Sigmoid colon (tissue), 7 donors: ENCODE measurements at regions of chr7 and their contacts with region 1.

Region 1: DNA sequence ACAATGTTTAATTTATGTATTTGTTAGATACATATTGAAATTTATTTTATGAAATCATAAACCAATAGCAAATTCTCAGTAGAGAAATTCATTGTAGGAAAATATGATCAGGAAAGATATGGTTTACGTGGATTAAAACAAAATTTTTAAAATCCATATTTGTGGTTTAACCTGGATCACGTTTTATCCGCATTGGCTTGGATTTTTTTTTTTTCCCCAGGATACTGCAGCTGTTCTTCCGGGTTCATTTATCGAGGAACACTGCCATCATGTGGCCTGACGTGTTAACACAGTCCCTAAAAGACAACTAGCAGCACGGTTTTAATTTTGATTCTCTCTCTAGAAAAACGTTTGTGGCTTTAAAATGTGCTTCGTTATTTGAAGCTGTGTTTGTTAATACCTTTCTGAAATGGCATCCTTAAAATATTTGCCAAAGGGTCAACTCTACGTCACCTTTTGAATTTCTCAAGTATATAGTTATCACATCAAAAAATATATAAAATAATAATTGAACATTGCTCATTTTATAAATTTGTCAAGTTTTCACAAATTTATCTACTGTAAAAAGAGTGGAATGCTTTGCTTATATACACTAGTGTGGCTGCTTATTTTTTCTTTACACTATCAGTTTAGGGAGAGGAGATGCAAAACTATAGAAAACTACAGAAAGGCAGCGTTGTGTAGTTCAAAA is 8.7 kb upstream of the ASB4 start:
- DNase-seq: peak; percentile 77
- H3K4me3 ChIP-seq: no peak overlapping the region
- H3K27ac ChIP-seq: no peak overlapping the region
- H3K4me1 ChIP-seq: no peaks in the 10 kb centered on the region
- H3K27me3 ChIP-seq: no peaks in the 10 kb centered on the region
- CTCF ChIP-seq: peak; percentile 38 to 71 (median 64)
- EP300 ChIP-seq: no peak
- POLR2A ChIP-seq: no peak

Region 2: DNA sequence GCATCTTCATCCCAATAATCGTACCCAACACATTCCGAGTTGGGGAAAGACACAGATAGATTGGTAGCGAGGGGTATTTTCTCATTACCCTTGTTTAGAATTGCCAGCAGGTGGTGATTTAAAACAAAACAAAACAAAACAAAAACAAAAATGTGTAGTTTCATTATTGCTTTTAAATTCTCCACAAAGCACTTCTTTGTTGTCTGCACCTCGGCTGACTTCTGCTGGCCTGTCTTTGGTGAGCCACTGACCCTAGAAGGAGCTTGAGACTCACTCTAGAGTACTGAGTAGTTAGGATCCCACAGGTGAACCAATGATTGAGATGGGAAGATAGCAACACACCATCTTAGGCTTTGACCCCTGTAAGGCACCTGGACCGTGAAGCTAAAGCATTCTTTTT is 1367.5 kb before region 1 on chr7:
- intact Hi-C with region 1: loop called (anchors 10 kb)
- DNase-seq: no peak
- H3K4me3 ChIP-seq: no peak overlapping the region
- H3K27ac ChIP-seq: no peak overlapping the region
- H3K4me1 ChIP-seq: no peaks in the 10 kb centered on the region
- H3K27me3 ChIP-seq: no peaks in the 10 kb centered on the region
- CTCF ChIP-seq: no peak
- EP300 ChIP-seq: no peak
- POLR2A ChIP-seq: no peak

Region 3: DNA sequence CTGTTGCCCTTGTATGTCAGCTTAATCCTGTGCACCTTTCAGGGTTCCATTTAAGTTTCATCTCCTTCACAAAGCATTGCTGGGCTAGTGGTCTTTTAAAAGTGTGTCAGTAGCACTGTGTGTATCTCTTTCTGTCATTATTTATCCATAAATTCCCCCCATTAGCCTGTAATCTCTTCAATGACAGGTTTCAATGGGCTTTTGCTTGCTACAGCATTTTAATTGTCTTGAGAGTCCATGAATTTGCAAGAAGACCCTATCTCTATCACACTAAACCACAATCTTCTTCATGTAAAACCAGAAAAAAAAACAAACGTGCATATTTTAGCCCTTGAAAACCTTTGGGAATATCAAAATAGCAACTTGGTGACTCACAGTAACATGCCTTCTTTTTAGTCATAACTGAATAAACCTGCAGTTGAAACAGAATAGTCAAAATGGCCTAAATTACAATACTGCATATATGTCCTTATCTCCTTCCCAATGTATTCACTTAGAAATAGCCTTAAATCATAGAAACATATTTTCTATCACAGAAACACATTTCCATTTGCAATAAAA is 271.3 kb before region 1 on chr7:
- intact Hi-C with region 1: loop called (anchors 5 kb)
- DNase-seq: no peak
- H3K4me3 ChIP-seq: no peak overlapping the region
- H3K27ac ChIP-seq: no peak overlapping the region
- H3K4me1 ChIP-seq: peaks cover 0 to 7% (median 0%) of the 10 kb centered on the region in 4 donors
- H3K27me3 ChIP-seq: no peaks in the 10 kb centered on the region
- CTCF ChIP-seq: no peak
- EP300 ChIP-seq: no peak
- POLR2A ChIP-seq: no peak

Region 4: DNA sequence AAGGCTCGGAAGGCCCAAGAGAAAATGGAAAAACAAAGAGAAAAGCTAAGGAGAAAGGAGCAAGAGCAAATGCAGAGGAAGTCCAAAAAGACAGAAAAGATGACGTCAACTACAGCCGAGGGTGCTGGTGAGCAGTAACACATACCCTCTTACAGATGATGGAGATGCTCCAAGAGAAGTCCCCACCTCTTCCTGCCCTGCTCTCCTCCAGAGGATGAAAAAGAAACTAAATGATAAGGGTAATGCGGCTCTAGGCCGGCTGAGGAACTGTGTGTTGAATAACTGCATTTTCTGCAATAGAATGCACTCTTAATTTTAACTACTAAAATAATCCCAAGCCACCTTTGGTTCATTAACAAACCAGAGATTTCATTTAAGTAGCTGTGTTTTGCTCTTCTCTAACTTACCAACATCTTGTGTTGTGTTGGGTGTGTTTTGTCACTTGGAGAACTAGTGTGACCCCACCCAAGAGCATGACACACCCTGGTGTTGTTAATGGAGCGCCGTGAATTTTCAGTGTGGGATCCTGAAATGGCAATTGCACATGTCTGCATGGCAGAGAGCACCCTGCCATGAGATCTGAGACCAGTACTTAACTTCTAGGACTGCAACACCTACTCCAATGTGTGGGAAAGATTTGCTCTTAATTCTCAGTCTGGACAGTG is 186.8 kb before region 1 on chr7:
- intact Hi-C with region 1: loop called (anchors 5 kb)
- DNase-seq: no peak
- H3K4me3 ChIP-seq: no peak overlapping the region
- H3K27ac ChIP-seq: no peak overlapping the region
- H3K4me1 ChIP-seq: no peaks in the 10 kb centered on the region
- H3K27me3 ChIP-seq: no peaks in the 10 kb centered on the region
- CTCF ChIP-seq: no peak
- EP300 ChIP-seq: no peak
- POLR2A ChIP-seq: no peak

Region 5: GRCh38 chr7:95396136-95397032 is 80.7 kb before region 1 on chr7 and contains the start of gene PON3:
- intact Hi-C with region 1: loop called (anchors 10 kb)
- DNase-seq: peak; percentile 68
- H3K4me3 ChIP-seq: peak within 1 kb of the TSS; percentile 33 to 56 (median 50)
- H3K27ac ChIP-seq: no peak within 1 kb of the TSS
- H3K4me1 ChIP-seq: peaks cover 0 to 12% (median 5%) of the 10 kb centered on the region in 4 donors
- H3K27me3 ChIP-seq: peaks cover 0 to 13% (median 0%) of the 10 kb centered on the region in 3 donors
- CTCF ChIP-seq: peak in 1 of 4 experiments; percentile 9
- EP300 ChIP-seq: no peak
- POLR2A ChIP-seq: no peak
- total RNA-seq, gene PON3: 0.68 to 1.7 (median 1.5) TPM